Activated CD4-positive, alpha-beta T cell treated with anti-CD3 and anti-CD28 coated beads for 36 hours (primary cell): ENCODE measurements at regions of chrX and their contacts with region 1.

Region 1: GRCh38 chrX:101415180-101416145 is 7.4 kb downstream of the HNRNPH2 start:
- DNase-seq: peak; percentile 24
- ATAC-seq: peak; percentile 81
- H3K4me3 Mint-ChIP-seq: peak overlapping the region; percentile 43
- H3K27ac Mint-ChIP-seq: peak overlapping the region; percentile 94
- H3K4me1 Mint-ChIP-seq: peaks cover 63% of the 10 kb centered on the region
- H3K27me3 Mint-ChIP-seq: no peaks in the 10 kb centered on the region

Region 2: GRCh38 chrX:101550362-101550750 is 134.9 kb after region 1 on chrX and contains the start of gene ARMCX1:
- CTCF ChIA-PET with region 1: no interaction called
- POLR2A ChIA-PET with region 1: no interaction called
- intact Hi-C with region 1: loop called in 1 of 2 experiments (anchors 10 kb)
- DNase-seq: peak; percentile 56
- ATAC-seq: peak; percentile 81
- H3K4me3 Mint-ChIP-seq: peak within 1 kb of the TSS; percentile 70
- H3K27ac Mint-ChIP-seq: no peak within 1 kb of the TSS
- H3K4me1 Mint-ChIP-seq: peaks cover 8% of the 10 kb centered on the region
- H3K27me3 Mint-ChIP-seq: peaks cover 9% of the 10 kb centered on the region
- total RNA-seq, gene ARMCX1: 1.9 to 2.6 TPM

Region 3: GRCh38 chrX:101658661-101659491 is 243.4 kb after region 1 on chrX:
- CTCF ChIA-PET with region 1: no interaction called
- POLR2A ChIA-PET with region 1: no interaction called
- intact Hi-C with region 1: loop called in 1 of 2 experiments (anchors 5 kb)
- DNase-seq: peak; percentile 81
- ATAC-seq: peak; percentile 90
- H3K4me3 Mint-ChIP-seq: peak overlapping the region; percentile 77
- H3K27ac Mint-ChIP-seq: peak overlapping the region; percentile 47
- H3K4me1 Mint-ChIP-seq: peaks cover 22% of the 10 kb centered on the region
- H3K27me3 Mint-ChIP-seq: no peaks in the 10 kb centered on the region

Region 4: DNA sequence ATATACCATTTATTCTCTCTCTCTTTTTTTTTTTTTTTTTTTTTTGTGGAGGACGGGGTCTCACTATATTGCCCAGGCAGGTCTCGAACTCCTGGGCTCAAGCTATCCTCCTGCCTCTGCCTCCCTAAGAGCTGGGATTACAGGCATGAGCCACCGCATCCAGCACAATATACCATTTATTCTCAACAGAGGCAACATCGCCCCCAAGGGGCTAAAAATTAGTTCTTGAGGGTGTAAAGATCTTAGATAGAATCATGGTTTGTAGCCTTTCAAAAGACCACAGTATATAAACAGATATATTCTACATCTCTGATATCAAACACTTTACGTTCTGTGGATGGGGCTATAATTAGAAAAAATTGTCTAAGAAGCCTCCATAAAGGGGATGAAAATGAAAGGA is 670.2 kb after region 1 on chrX:
- CTCF ChIA-PET with region 1: no interaction called
- POLR2A ChIA-PET with region 1: no interaction called
- intact Hi-C with region 1: loop called in 1 of 2 experiments (anchors 10 kb)
- DNase-seq: peak; percentile 20
- ATAC-seq: no peak
- H3K4me3 Mint-ChIP-seq: no peak overlapping the region
- H3K27ac Mint-ChIP-seq: no peak overlapping the region
- H3K4me1 Mint-ChIP-seq: no peaks in the 10 kb centered on the region
- H3K27me3 Mint-ChIP-seq: peaks cover 12% of the 10 kb centered on the region

Region 5: GRCh38 chrX:102599084-102599950 is 1183.9 kb after region 1 on chrX and contains the start of gene ARMCX5:
- CTCF ChIA-PET with region 1: no interaction called
- POLR2A ChIA-PET with region 1: no interaction called
- intact Hi-C with region 1: loop called in 1 of 2 experiments (anchors 10 kb)
- DNase-seq: peak; percentile 80
- ATAC-seq: peak; percentile 92
- H3K4me3 Mint-ChIP-seq: peak within 1 kb of the TSS; percentile 89
- H3K27ac Mint-ChIP-seq: peak within 1 kb of the TSS; percentile 98
- H3K4me1 Mint-ChIP-seq: peaks cover 22% of the 10 kb centered on the region
- H3K27me3 Mint-ChIP-seq: no peaks in the 10 kb centered on the region
- total RNA-seq, gene ARMCX5: 12.6 to 13.3 TPM